ENCODE measurements at regions of chr5 and their contacts with region 1.

Region 1: DNA sequence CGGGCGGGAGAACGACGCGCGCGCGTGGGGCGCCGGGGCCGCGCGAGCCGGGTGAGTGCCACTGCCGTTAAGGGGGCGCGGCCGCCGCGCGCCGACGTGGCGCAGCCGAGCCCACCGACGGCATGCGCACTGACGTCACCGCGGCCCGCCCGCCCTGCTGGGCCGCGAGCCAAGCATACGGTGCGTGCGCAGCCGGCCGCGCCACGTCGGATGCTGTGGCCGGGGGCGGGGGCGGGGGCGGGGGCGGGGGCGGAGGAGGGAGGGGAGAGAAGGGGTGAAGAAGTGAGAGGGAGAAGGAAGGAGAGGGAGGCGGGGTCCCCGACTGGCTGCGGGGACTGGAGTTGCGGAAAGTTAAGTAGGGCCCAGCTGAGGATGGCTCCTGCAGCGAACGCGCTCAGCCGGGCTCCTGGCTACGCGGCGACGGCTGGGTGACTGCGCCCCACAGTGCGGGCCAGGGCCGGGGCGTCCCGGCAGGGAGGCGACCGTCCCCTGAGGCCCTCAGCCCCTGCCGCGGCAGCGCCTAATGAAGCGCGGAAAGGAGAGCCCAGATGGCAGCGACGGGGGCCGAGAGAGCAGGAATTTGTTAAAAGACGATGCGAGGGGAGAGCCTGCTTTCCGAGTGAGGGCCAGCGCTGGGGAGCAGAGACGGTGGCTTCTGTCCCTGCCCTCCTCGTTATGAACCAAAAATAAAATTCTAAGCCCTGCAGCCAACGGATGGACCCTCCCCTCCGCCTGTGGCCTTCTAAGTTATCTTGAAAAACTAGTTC is at the start of gene DAP:
- DNase-seq: peak; percentile 96
- ATAC-seq: peak; percentile 81
- H3K4me3 ChIP-seq: peak within 1 kb of the TSS; percentile 53 to 76 (median 68)
- H3K4me3 Mint-ChIP-seq: peak within 1 kb of the TSS; percentile 94
- H3K27ac ChIP-seq: peak within 1 kb of the TSS; percentile 92 to 93
- H3K27ac Mint-ChIP-seq: peak within 1 kb of the TSS; percentile 97
- H3K4me1 ChIP-seq: peaks cover 26 to 47% of the 10 kb centered on the region in 2 donors
- H3K4me1 Mint-ChIP-seq: peaks cover 51% of the 10 kb centered on the region
- H3K27me3 ChIP-seq: no peaks in the 10 kb centered on the region
- H3K27me3 Mint-ChIP-seq: no peaks in the 10 kb centered on the region
- CTCF ChIP-seq: no peak
- total RNA-seq, gene DAP: 49.2 and 49.8 TPM in 2 replicates

Region 2: GRCh38 chr5:10441083-10441991 is 320.0 kb before region 1 on chr5 and contains the start of gene ROPN1L:
- CTCF ChIA-PET with region 1: no interaction called
- POLR2A ChIA-PET with region 1: no interaction called
- intact Hi-C with region 1: loop called (anchors 2 kb)
- DNase-seq: peak; percentile 86
- ATAC-seq: peak; percentile 95
- H3K4me3 ChIP-seq: peak within 1 kb of the TSS; percentile 66 to 85 (median 70)
- H3K4me3 Mint-ChIP-seq: peak within 1 kb of the TSS; percentile 93
- H3K27ac ChIP-seq: no peak within 1 kb of the TSS
- H3K27ac Mint-ChIP-seq: peak within 1 kb of the TSS; percentile 59
- H3K4me1 ChIP-seq: peaks cover 27 to 41% of the 10 kb centered on the region in 2 donors
- H3K4me1 Mint-ChIP-seq: peaks cover 35% of the 10 kb centered on the region
- H3K27me3 ChIP-seq: peaks cover 0 to 5% (median 0%) of the 10 kb centered on the region in 4 experiments
- H3K27me3 Mint-ChIP-seq: peaks cover 4% of the 10 kb centered on the region
- CTCF ChIP-seq: no peak
- total RNA-seq, gene ROPN1L: 0.34 and 0.91 TPM in 2 replicates

Region 3: GRCh38 chr5:10577371-10578292 is 183.7 kb before region 1 on chr5:
- CTCF ChIA-PET with region 1: no interaction called
- POLR2A ChIA-PET with region 1: no interaction called
- intact Hi-C with region 1: loop called (anchors 5 kb)
- DNase-seq: peak; percentile 12
- ATAC-seq: no peak
- H3K4me3 ChIP-seq: no peak overlapping the region
- H3K4me3 Mint-ChIP-seq: peak overlapping the region; percentile 52
- H3K27ac ChIP-seq: no peak overlapping the region
- H3K27ac Mint-ChIP-seq: peak overlapping the region; percentile 64
- H3K4me1 ChIP-seq: peaks cover 59 to 60% of the 10 kb centered on the region in 2 donors
- H3K4me1 Mint-ChIP-seq: peaks cover 81% of the 10 kb centered on the region
- H3K27me3 ChIP-seq: no peaks in the 10 kb centered on the region
- H3K27me3 Mint-ChIP-seq: no peaks in the 10 kb centered on the region
- CTCF ChIP-seq: no peak

Region 4: GRCh38 chr5:10701567-10702039 is 59.7 kb before region 1 on chr5:
- CTCF ChIA-PET with region 1: interaction called, 3 read pairs
- POLR2A ChIA-PET with region 1: interaction called, 3 read pairs
- intact Hi-C with region 1: loop called (anchors 5 kb)
- DNase-seq: peak; percentile 56
- ATAC-seq: no peak
- H3K4me3 ChIP-seq: no peak overlapping the region
- H3K4me3 Mint-ChIP-seq: no peak overlapping the region
- H3K27ac ChIP-seq: no peak overlapping the region
- H3K27ac Mint-ChIP-seq: no peak overlapping the region
- H3K4me1 ChIP-seq: peaks cover 20 to 43% of the 10 kb centered on the region in 2 donors
- H3K4me1 Mint-ChIP-seq: peaks cover 47% of the 10 kb centered on the region
- H3K27me3 ChIP-seq: no peaks in the 10 kb centered on the region
- H3K27me3 Mint-ChIP-seq: no peaks in the 10 kb centered on the region
- CTCF ChIP-seq: peak; percentile 89

Region 5: GRCh38 chr5:10735569-10736276 is 25.6 kb before region 1 on chr5:
- CTCF ChIA-PET with region 1: interaction called, 3 read pairs
- POLR2A ChIA-PET with region 1: no interaction called
- intact Hi-C with region 1: loop called (anchors 2 kb)
- DNase-seq: peak; percentile 86
- ATAC-seq: peak; percentile 92
- H3K4me3 ChIP-seq: no peak overlapping the region
- H3K4me3 Mint-ChIP-seq: peak overlapping the region; percentile 46
- H3K27ac ChIP-seq: peak overlapping the region; percentile 34 to 50
- H3K27ac Mint-ChIP-seq: peak overlapping the region; percentile 83
- H3K4me1 ChIP-seq: peaks cover 35% of the 10 kb centered on the region in 2 donors
- H3K4me1 Mint-ChIP-seq: peaks cover 44% of the 10 kb centered on the region
- H3K27me3 ChIP-seq: no peaks in the 10 kb centered on the region
- H3K27me3 Mint-ChIP-seq: no peaks in the 10 kb centered on the region
- CTCF ChIP-seq: peak; percentile 41

Measured in B cell (primary cell).